Endothelial cell of umbilical vein (primary cell): ENCODE measurements at regions of chrX and their contacts with region 1.

Region 1: DNA sequence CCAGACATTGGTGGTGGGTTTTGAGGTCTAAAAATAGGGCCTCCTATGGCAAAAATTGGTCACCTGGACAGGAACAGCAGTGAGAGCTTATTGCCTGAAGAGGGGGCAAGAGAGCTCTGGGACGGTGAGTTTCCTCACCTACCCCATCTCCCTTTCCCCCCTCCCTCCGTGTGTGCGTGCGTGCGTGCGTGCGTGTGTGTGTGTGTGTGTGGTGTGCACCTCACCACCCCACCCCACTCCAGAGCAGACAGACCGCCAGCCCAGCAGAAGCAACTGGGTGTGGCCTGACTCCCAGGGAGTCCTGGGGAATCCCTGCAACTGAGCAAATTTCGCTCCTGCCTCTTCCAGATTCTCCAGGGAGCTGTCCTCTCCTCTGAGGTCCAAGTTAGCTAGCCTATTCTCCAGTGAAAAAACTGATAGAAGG is 44.7 kb downstream of the PRPS1 start:
- DNase-seq: peak; percentile 60
- H3K4me3 ChIP-seq: no peak overlapping the region
- H3K27ac ChIP-seq: peak overlapping the region; percentile 74
- H3K4me1 ChIP-seq: peaks cover 25% of the 10 kb centered on the region
- H3K27me3 ChIP-seq: no peaks in the 10 kb centered on the region
- CTCF ChIP-seq: peak; percentile 60 to 72
- POLR2A ChIP-seq: no peak

Region 2: GRCh38 chrX:107654872-107655761 is 17.9 kb before region 1 on chrX:
- CTCF ChIA-PET with region 1: interaction called, 18 read pairs
- POLR2A ChIA-PET with region 1: no interaction called
- dilution Hi-C with region 1: no loop called
- intact Hi-C with region 1: no loop called
- DNase-seq: peak; percentile 49
- H3K4me3 ChIP-seq: no peak overlapping the region
- H3K27ac ChIP-seq: peak overlapping the region; percentile 45
- H3K4me1 ChIP-seq: peaks cover 6% of the 10 kb centered on the region
- H3K27me3 ChIP-seq: no peaks in the 10 kb centered on the region
- CTCF ChIP-seq: peak; percentile 65 to 74
- POLR2A ChIP-seq: no peak

Region 3: DNA sequence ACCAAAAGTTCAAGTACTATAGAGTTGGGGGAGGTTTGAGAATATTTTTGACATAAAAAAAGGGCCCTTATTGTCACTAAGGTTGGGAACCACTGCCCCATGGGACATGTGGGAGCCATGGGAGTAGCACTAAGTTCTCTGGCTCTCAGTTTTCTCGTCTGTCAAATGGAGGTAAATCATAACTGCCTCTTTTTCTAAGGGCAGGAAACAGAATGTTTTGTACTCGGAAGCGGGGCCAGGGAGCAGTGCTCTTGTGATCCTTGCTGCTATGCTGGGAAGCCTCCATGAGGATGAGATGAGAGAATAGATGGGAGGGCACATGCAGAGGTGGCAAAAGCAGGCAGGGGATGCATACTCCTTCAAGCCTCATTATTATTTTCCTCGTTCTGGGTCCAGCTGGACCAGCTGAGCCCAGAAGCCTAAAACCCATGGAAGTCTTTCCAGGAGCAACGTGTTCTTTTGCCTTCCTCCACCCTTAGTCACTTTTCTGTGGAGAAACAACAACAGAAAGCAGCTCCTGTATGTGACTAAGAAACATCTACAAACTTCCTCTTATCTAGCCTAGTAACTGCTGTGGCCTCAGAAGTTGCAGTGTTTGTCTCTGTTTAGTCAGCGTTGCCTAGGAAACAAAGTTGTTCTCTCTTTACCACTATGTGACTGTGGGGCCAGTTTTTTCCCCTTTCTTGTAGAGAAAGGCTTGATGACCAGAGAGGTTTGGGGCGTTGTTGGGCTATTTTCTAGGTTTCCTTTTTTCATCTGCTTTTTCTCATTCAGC is 37.8 kb after region 1 on chrX:
- CTCF ChIA-PET with region 1: interaction called, 142 read pairs
- POLR2A ChIA-PET with region 1: interaction called, 40 read pairs
- dilution Hi-C with region 1: no loop called
- intact Hi-C with region 1: loop called (anchors 1 kb)
- DNase-seq: peak; percentile 87
- H3K4me3 ChIP-seq: no peak overlapping the region
- H3K27ac ChIP-seq: peak overlapping the region; percentile 95
- H3K4me1 ChIP-seq: peaks cover 17% of the 10 kb centered on the region
- H3K27me3 ChIP-seq: no peaks in the 10 kb centered on the region
- CTCF ChIP-seq: no peak
- POLR2A ChIP-seq: no peak

Region 4: DNA sequence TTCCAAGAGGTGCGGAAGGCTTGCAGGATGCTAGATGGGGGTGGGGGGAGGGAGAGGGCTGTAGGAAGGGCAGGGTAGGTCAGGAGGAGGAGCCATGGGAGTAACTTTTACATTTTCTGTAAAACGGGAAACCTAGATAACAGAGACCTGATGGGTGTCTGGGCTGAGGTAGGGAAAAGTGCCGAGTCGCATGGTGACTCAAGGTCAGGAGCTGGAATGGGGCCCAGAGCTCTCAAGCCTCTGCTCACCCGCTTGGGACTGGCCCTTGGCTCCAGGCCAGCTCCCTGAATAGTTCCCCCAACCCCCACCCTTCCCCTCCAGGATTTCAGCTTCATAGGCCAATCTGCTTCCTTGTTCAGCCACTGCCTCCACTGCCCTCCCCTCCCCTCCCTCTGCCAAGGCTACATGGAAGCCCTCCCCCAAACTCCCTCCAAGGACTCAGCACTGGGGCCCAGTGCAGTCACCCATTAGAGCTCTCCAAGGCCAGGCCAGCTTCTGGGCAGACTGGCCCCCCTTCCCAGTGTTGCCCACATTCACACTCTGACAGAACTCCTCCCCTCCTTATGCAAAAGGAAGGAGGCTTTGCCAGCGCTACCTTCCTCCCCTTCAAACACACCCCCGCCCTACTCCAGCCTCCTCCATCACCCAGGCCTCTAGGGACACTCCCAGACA is 59.0 kb after region 1 on chrX:
- CTCF ChIA-PET with region 1: interaction called, 14 read pairs
- POLR2A ChIA-PET with region 1: interaction called, 3 read pairs
- dilution Hi-C with region 1: no loop called
- intact Hi-C with region 1: loop called (anchors 5 kb)
- DNase-seq: peak; percentile 90
- H3K4me3 ChIP-seq: no peak overlapping the region
- H3K27ac ChIP-seq: peak overlapping the region; percentile 13
- H3K4me1 ChIP-seq: peaks cover 24% of the 10 kb centered on the region
- H3K27me3 ChIP-seq: no peaks in the 10 kb centered on the region
- CTCF ChIP-seq: no peak
- POLR2A ChIP-seq: peak; percentile 26

Region 5: DNA sequence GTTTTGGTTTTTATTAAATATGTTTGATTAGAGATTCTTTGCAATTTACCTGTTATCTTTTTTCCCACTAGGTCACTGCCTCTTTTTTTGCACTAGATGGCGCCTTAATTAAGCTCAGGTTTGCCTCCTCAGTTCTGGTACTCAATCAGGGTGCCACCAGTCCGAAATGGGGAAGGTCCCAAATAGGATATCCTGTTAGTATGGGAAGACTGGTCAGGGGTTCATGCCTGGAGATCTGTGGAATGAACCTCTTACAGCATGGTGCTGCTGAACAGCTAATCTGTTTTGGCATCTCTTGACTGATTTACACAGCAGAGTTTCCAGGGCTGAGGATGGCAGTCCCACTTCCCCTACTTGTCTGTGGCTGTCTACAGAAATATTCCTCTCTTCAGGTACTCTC is 347.7 kb after region 1 on chrX:
- CTCF ChIA-PET with region 1: no interaction called
- POLR2A ChIA-PET with region 1: no interaction called
- dilution Hi-C with region 1: no loop called
- intact Hi-C with region 1: loop called (anchors 2 kb)
- DNase-seq: peak; percentile 55
- H3K4me3 ChIP-seq: no peak overlapping the region
- H3K27ac ChIP-seq: no peak overlapping the region
- H3K4me1 ChIP-seq: peaks cover 19% of the 10 kb centered on the region
- H3K27me3 ChIP-seq: no peaks in the 10 kb centered on the region
- CTCF ChIP-seq: peak; percentile 26 to 44
- POLR2A ChIP-seq: no peak

Region 6: DNA sequence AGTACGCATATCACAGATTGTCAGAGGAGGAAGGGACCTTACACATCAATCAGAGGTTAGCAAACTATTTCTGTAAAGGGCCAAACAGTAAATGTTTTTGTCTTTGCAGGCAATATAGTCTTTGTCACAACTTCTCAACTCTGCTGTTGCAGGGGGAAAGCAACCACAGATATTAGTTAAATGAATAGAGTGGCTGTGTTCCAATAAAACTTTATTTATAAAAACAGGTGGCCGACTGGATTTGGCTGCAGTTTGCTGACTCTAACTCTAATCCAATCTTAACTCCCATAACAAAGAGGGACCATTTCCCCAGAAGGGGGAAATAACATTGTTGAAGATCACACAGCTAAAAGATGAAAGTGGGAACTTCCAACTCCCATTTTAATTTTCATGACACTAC is 696.7 kb after region 1 on chrX:
- CTCF ChIA-PET with region 1: no interaction called
- POLR2A ChIA-PET with region 1: no interaction called
- dilution Hi-C with region 1: no loop called
- intact Hi-C with region 1: no loop called
- DNase-seq: no peak
- H3K4me3 ChIP-seq: no peak overlapping the region
- H3K27ac ChIP-seq: no peak overlapping the region
- H3K4me1 ChIP-seq: no peaks in the 10 kb centered on the region
- H3K27me3 ChIP-seq: no peaks in the 10 kb centered on the region
- CTCF ChIP-seq: no peak
- POLR2A ChIP-seq: no peak